WTC11 (cell line): ENCODE measurements at regions of chr3 and their contacts with region 1.

Region 1: DNA sequence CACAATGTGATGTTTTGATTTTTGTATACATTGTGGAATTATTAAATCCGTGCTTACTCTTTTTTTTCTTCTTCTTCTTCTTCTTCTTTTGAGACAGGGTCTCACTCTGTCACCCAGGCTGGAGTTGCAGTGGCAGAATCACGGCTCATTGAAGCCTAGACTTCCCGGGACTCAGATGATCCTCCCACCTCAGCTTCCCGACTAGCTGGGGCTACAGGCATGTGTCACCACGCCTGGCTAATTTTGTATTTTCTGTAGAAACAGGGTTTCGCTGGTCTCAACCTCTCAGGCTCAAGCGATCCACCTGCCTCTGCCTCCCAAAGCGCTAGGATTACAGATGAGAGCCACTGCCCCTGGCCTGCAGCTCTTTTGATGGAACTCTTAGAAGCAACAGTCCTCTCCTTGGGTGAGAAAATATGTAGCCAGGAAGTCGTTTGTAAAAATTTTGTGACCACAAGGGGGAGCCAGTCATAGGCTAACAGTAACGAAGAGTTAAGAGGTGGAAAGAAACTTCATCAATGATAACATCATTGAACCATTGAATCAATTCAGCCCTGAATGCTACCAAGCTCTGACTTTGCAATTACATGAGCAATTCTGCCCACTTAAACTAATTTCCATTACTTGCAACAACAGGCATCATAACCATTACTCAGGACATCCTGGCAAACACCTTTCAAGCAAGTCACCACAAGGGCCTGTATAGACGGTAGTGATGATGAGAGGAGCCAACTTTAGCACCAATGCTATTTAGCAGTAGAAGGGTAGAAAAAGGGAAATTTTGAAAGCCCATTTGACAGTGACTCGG is 16.7 kb upstream of the CMTM7 start:
- DNase-seq: peak; percentile 54
- ATAC-seq: peak; percentile 86
- H3K4me3 Mint-ChIP-seq: no peak overlapping the region
- H3K27ac Mint-ChIP-seq: peak overlapping the region; percentile 66; the same call in 1 of the 2 replicates
- H3K4me1 Mint-ChIP-seq: peaks cover 5% of the 10 kb centered on the region
- H3K27me3 Mint-ChIP-seq: no peaks in the 10 kb centered on the region
- CTCF ChIP-seq: peak; percentile 67

Region 2: DNA sequence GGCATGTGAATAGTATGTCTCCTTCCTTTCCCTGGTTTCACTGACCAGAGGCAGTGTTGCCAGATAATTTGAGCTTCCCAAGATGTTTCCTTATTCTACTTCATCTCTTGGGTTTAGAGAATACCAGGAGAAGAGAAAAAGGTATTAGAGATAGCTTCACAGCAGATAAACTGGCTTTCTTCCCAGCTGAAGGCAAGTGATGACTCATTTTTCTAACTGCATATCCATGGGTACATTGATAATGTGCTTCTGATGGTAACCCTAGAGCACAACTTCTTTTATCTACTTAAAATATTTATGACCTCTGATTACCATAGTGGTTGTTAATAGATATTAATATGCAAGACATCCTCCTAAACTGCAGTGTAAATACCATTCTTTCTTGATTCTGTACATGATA is 171.1 kb before region 1 on chr3:
- CTCF ChIA-PET with region 1: no interaction called
- POLR2A ChIA-PET with region 1: no interaction called
- DNase-seq: no peak
- ATAC-seq: no peak
- H3K4me3 Mint-ChIP-seq: no peak overlapping the region
- H3K27ac Mint-ChIP-seq: no peak overlapping the region
- H3K4me1 Mint-ChIP-seq: no peaks in the 10 kb centered on the region
- H3K27me3 Mint-ChIP-seq: no peaks in the 10 kb centered on the region
- CTCF ChIP-seq: no peak

Region 3: DNA sequence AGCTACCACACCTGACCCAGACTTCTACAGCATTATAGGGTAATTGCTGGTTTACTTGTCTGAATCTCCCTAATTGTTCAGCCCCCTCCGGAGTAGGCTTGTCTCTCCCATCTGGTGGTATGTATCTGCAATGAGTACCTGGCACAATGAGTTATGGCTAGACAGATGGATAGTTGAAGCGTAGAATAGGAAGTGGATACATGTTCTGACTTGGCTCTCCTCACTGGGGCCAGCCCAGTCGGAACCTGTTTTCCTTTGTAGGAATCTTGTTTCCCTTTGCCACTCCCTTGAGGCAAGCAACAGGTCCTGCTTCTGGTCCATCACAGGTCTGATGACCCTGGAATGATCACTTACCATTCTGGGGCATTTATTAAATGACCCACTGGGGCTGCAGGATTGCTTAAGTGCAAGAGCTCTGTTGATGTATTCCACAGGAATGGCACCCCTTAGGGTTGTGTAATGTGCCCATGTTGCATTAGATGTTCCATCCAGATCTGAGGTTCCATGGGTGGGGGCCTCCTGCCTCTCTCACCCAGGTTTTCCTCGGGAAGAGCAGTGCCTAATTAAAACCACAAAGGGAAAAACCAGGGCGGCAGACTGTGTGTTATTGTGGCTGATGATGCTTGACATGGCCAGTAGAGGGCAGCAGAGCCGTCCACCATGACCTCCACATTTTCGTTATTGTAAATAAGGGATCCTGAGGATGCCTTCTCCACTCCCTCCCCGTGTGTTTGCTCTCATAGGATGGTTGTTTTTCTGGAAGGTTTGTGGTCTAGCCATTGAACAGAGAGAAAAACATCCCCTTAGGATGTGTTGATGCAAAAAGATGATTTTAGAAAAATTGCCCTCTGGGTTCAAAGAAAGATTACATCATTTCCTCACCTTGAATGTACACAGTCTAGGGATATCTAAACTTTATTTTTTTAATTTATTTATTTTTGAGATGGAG is 78.5 kb before region 1 on chr3:
- CTCF ChIA-PET with region 1: interaction called, 11 read pairs
- POLR2A ChIA-PET with region 1: no interaction called
- DNase-seq: peak; percentile 72
- ATAC-seq: peak; percentile 95
- H3K4me3 Mint-ChIP-seq: no peak overlapping the region
- H3K27ac Mint-ChIP-seq: no peak overlapping the region
- H3K4me1 Mint-ChIP-seq: peaks cover 10% of the 10 kb centered on the region
- H3K27me3 Mint-ChIP-seq: no peaks in the 10 kb centered on the region
- CTCF ChIP-seq: peak; percentile 89

Region 4: DNA sequence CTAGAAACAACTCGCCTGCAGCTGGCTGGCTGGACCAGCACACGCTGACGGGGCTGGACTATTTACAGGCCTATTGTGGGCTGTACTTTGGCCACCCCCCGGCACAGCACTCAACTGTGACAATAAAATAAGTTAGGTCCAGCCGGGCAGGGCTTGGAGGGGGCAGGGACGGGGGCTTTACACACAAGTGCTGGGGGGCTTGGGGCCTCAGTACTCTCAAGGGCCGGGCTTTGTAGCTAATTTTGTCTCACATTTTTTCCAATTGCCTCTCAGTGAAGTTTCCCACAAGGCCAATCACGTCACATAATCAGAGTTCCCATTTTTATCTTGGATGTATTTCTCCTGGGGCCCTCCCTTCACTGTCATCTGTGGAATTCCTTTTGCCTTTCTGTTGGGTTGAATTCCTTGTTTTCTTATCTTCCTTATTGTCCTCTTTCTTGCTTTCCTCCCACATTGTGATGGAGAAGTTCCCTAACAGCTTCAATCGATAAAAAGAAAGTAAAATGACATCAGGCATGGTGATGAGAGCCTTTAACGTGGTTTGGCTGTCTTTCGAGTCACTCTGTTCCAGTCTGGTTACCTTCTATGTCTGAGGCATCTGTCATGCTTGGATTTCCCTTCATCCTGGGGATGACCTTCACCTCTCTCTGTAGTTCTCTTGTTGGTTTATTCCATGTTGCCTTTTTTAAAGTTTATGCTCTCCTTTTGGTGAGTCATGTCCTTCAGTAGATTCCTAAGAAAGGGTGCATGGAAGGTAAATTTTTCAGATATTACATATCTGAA is 27.5 kb before region 1 on chr3:
- CTCF ChIA-PET with region 1: interaction called, 11 read pairs
- POLR2A ChIA-PET with region 1: no interaction called
- DNase-seq: no peak
- ATAC-seq: peak; percentile 20
- H3K4me3 Mint-ChIP-seq: no peak overlapping the region
- H3K27ac Mint-ChIP-seq: peak overlapping the region; percentile 54
- H3K4me1 Mint-ChIP-seq: peaks cover 29% of the 10 kb centered on the region
- H3K27me3 Mint-ChIP-seq: no peaks in the 10 kb centered on the region
- CTCF ChIP-seq: no peak

Region 5: DNA sequence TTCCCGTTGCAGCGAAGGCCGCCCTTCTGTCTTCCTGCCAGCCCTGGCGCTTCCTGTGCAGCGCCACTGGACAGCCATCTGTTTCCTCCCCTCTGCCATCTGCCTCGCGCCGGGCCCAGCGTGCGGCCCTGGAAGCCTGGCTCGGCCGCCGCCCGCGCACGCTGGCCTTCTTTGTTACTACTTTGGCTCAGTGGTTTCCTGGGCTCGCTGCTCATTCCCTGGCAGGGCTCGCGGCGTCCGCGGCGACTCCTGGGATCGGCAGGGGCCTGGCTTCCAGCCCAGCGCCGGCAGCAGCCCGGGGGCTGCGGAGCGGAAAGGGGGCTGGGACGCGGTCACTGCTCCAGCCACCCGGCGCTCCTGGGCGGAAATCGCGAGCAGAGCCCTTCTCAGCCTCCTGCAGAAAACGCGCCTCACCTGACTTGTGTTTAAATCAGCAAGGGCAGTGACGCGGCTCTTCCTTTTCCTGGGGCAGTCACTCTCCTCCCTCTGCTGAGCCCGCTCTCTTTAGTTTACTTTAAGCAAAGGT is 26.6 kb after region 1 on chr3:
- CTCF ChIA-PET with region 1: interaction called, 11 read pairs
- POLR2A ChIA-PET with region 1: no interaction called
- DNase-seq: peak; percentile 74
- ATAC-seq: peak; percentile 76
- H3K4me3 Mint-ChIP-seq: peak overlapping the region; percentile 63
- H3K27ac Mint-ChIP-seq: peak overlapping the region; percentile 94
- H3K4me1 Mint-ChIP-seq: peaks cover 36% of the 10 kb centered on the region
- H3K27me3 Mint-ChIP-seq: no peaks in the 10 kb centered on the region
- CTCF ChIP-seq: no peak

Region 6: DNA sequence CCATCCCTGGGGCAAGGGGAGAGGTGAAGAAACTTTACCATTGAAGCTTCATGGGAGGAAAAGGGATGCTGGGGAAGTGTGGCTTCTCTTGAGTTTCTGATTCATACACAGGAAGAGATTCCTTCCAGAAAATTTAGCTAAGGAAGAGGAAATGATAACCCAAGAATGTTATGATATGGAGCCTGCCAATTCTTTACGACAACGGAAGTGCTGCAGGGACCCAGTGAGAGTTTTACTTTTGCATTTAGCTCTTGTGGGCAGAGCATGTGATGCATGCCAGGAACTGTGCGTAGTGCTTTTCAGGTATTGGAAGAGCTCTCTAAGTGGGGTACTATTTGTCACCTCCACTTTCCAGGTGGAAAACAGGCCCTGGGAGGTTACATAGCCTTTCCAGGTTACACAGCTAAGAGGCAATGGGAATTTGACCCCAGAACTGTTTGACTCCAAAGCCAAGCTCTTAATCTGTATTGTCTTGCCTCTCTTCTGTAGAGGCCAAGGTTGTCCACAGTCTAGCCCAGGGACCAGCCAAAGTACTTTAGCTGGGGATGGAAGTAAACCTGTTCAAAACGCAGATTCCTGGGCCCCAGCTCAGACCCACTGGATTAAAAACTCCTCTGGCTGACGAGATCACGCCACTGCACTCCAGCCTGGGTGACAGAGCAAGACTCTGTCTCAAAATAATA is 39.7 kb after region 1 on chr3:
- CTCF ChIA-PET with region 1: interaction called, 16 read pairs
- POLR2A ChIA-PET with region 1: no interaction called
- DNase-seq: no peak
- ATAC-seq: no peak
- H3K4me3 Mint-ChIP-seq: no peak overlapping the region
- H3K27ac Mint-ChIP-seq: no peak overlapping the region; the same call in 1 of the 2 replicates
- H3K4me1 Mint-ChIP-seq: peaks cover 38% of the 10 kb centered on the region
- H3K27me3 Mint-ChIP-seq: no peaks in the 10 kb centered on the region
- CTCF ChIP-seq: no peak

Region 7: DNA sequence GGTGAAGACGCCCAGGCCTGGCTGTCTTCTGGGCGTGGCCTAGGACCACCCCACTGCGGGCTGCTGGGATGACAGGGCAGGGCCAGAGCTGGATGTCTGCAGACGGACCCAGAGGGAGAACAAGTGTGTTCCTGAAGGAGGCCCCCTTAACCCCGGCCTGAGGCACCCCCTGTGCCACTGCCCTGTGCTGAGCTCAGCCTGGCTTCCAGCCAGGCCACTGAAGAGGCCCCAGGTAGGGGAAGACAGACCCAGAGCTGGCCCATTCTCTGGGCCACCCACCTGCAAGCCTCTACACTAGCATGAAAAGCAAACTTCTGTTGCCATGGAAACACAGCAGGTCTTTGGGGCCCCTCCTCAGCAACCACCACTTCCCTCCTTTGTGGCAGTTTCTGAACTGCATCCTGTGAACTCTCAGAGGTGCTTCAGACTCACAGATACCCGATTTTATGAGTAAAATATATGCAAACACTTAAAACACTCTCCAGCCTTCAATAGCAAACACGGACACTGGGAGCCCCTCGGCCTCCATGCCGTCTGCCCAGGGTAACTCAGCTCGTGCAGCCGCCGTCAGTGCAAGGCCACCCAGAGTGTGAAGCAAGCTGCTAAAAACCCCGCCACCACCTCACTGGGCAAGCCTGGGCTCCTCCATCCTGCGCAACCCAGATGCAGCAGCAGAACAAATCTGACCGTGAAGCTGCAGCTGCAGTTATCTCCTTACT is 85.2 kb after region 1 on chr3:
- CTCF ChIA-PET with region 1: interaction called, 23 read pairs
- POLR2A ChIA-PET with region 1: no interaction called
- DNase-seq: peak; percentile 73
- ATAC-seq: peak; percentile 92
- H3K4me3 Mint-ChIP-seq: peak overlapping the region; percentile 46
- H3K27ac Mint-ChIP-seq: peak overlapping the region; percentile 85
- H3K4me1 Mint-ChIP-seq: peaks cover 26% of the 10 kb centered on the region
- H3K27me3 Mint-ChIP-seq: no peaks in the 10 kb centered on the region
- CTCF ChIP-seq: no peak